Activated T-helper 1 cell treated with anti-CD3 and anti-CD28 coated beads, Interleukin-12 subunit alpha, Interleukin-12 subunit beta, Interleukin-2, Interleukin-4 antibody, amounts not matched to agents 30 ng/mL and 10 ng/mL and 1 ng/mL, durations not matched to agents 14 hours and 24 hours and 36 hours (primary cell): ENCODE measurements at regions of chr11 and their contacts with region 1.

Region 1: DNA sequence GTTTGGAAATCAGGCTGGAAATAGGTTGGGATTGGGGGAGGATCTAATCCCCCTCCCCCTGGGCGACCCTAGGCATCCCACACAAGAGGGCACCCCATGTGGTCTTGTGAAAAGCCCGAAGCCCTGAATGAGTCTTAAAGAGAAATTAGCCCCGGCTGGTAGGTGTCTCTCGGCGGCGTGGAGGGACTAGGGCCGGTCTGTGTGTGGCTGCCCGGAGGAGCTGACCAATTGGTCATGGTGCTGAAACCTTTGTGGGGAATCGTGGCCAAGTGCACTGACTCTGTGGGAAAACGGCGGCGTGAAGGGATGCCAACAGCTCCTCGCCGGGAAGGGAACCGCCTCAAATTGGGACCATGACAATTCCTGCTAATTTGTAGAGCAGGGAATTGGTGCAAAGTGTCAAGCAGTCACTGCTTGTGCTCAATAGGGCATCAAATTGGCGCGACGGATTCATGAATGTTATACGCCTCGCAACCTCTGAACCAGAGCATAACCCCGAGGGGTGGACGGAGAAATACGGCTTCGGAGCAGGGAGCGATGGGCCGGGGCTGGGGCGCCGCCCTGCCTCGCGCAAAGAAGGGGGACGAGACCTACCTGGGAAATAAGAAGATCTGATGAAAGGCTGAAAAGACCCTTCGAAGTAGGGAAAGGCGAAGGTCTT is 1.5 kb downstream of the DBX1 start:
- DNase-seq: no peak
- H3K4me3 Mint-ChIP-seq: no peak overlapping the region
- H3K27ac Mint-ChIP-seq: peak overlapping the region; percentile 72
- H3K4me1 Mint-ChIP-seq: peaks cover 17% of the 10 kb centered on the region
- H3K27me3 Mint-ChIP-seq: peaks cover 78% of the 10 kb centered on the region

Region 2: DNA sequence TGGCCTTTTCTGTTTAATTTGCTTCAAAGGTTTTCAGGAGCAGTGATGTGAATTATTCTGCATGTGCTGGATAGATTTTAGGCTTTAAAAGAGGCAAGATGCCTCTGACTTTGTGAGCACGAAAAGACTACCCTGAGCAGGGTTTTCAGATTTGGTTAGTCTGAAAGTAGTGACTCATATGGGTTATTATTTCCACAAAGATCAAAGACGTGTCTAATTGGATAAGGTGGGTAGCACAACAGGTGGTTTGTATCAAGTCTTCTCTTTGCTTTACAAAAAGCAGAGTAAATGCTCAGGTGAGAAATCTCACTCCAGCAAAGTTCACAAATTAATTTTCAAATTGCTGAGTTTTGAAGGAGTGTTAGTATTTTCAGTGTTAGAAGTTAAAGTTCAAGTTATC is 39.2 kb after region 1 on chr11:
- intact Hi-C with region 1: no loop called
- DNase-seq: no peak
- H3K4me3 Mint-ChIP-seq: no peak overlapping the region
- H3K27ac Mint-ChIP-seq: no peak overlapping the region
- H3K4me1 Mint-ChIP-seq: peaks cover 9% of the 10 kb centered on the region
- H3K27me3 Mint-ChIP-seq: peaks cover 23% of the 10 kb centered on the region

Region 3: DNA sequence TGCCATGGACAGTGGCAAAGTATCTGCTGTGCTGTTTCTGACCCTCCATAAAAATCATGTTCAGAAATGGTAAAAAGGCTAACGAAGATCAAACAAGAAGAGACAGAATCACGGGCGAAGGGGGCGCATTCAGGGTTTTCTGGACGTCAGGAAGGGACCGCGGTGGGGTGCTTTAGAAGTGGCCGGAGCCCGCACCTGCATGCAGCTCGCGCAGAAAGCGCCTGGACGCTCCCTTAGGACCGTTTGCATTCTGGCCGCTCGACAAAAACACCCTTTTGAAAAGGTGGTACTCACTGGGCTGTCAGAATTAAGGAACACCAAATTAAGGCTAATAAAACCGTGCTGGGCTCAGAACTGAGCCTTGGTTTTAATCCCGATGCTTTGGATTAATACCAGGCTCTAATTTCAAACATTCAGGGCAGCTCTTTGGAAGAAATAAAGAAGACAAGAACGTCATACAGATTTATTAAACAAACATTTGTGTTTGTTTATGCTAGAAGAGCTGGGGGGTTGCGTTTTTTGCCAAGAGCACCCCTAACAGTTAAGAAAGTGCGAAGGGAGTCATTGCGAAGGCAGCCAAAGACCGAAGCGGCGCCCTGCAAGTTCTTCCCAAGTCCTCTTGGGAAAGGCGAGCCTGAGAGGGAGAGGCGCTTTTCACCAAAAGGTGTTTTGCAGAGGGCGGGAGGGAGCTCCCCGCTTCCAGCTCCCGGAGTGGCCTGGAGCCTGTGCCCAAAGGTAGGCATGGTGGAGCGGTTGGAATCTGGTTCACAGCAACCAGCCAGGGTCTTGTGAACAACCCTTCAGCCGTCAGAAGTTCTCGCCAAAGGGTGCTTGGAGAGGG is 49.3 kb after region 1 on chr11:
- intact Hi-C with region 1: loop called (anchors 5 kb)
- DNase-seq: no peak
- H3K4me3 Mint-ChIP-seq: no peak overlapping the region
- H3K27ac Mint-ChIP-seq: no peak overlapping the region
- H3K4me1 Mint-ChIP-seq: no peaks in the 10 kb centered on the region
- H3K27me3 Mint-ChIP-seq: peaks cover 47% of the 10 kb centered on the region

Region 4: GRCh38 chr11:20321177-20321576 is 162.4 kb after region 1 on chr11:
- intact Hi-C with region 1: no loop called
- DNase-seq: no peak
- H3K4me3 Mint-ChIP-seq: no peak overlapping the region
- H3K27ac Mint-ChIP-seq: no peak overlapping the region
- H3K4me1 Mint-ChIP-seq: no peaks in the 10 kb centered on the region
- H3K27me3 Mint-ChIP-seq: peaks cover 8% of the 10 kb centered on the region

Region 5: DNA sequence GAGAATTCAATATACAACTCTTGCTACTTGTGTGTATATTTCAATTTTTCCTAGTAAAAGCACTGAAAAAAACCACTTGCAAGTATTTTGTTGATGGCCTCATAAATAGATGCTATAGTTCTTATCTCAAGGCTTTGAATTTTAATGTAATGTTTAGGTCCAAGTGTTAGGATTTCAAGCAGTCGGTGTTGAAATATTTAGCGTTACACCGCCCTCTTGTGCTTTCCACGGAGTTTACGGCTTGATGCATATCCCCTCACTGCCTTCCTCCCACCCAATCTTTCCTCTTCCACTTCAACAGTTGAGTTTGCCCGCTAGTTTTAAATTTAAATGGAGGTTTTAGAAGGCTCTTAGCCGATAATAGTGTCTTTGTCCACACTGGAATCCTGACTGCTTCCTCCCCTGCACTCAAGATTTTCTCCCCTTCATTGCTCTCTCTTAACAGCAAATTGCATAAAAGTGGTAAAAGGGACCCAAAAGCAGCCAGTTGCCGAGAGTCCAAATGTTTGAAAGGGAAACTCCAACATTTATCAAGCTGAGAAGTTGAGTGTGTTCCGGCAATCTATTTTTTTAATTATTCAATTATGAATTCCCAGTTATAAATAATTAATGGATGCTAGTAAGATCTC is 178.9 kb after region 1 on chr11:
- intact Hi-C with region 1: loop called (anchors 10 kb)
- DNase-seq: no peak
- H3K4me3 Mint-ChIP-seq: no peak overlapping the region
- H3K27ac Mint-ChIP-seq: no peak overlapping the region
- H3K4me1 Mint-ChIP-seq: no peaks in the 10 kb centered on the region
- H3K27me3 Mint-ChIP-seq: peaks cover 45% of the 10 kb centered on the region

Region 6: GRCh38 chr11:20599221-20600019 is 440.7 kb after region 1 on chr11 and contains the start of gene SLC6A5:
- intact Hi-C with region 1: loop called (anchors 2 kb)
- DNase-seq: no peak
- H3K4me3 Mint-ChIP-seq: no peak within 1 kb of the TSS
- H3K27ac Mint-ChIP-seq: peak within 1 kb of the TSS; percentile 40
- H3K4me1 Mint-ChIP-seq: no peaks in the 10 kb centered on the region
- H3K27me3 Mint-ChIP-seq: peaks cover 77% of the 10 kb centered on the region
- total RNA-seq, gene SLC6A5: not detected in 2 replicates

Region 7: DNA sequence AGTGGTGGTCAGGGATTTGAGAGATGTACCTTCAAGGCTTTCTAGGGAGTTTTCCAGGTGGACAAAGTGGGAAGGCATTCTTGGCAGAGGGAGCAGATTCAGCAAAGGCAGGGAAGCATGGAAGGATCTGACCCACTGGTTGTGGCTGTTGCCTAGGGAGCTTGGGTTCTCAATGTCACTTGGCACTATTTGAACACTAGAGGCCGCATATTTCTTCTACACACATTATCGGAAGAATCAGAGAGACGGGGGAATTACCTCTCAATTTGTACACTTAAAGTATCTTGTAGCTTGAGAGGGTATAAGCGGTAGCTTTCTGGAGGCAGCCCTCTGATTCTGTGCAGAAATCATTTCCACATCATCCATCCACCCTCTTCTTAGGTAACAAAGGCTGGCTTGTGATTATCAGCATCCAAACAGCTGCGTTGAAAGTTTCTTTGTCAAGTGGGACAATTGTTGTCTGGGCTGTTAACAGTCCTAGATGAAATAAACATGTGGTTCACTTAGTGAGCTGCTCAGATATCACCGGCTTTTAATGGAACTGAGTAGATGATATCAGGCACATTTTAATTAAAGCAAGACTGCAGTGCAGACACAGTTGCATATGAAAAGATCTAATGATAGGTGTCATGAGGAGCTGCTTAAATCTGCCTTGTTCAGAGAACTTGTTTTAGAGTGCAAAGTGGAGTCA is 513.3 kb after region 1 on chr11:
- intact Hi-C with region 1: loop called (anchors 5 kb)
- DNase-seq: no peak
- H3K4me3 Mint-ChIP-seq: no peak overlapping the region
- H3K27ac Mint-ChIP-seq: no peak overlapping the region
- H3K4me1 Mint-ChIP-seq: no peaks in the 10 kb centered on the region
- H3K27me3 Mint-ChIP-seq: peaks cover 53% of the 10 kb centered on the region